ENCODE measurements at regions of chr3 and their contacts with region 1.

Region 1: GRCh38 chr3:99842826-99843589 is 25.3 kb downstream of the CMSS1 start:
- DNase-seq: peak; percentile 52
- H3K4me3 Mint-ChIP-seq: no peak overlapping the region
- H3K27ac Mint-ChIP-seq: no peak overlapping the region
- H3K4me1 Mint-ChIP-seq: no peaks in the 10 kb centered on the region
- H3K27me3 Mint-ChIP-seq: no peaks in the 10 kb centered on the region
- CTCF ChIP-seq: peak; percentile 69

Region 2: GRCh38 chr3:99699841-99700240 is 143.2 kb before region 1 on chr3:
- CTCF ChIA-PET with region 1: no interaction called
- POLR2A ChIA-PET with region 1: no interaction called
- intact Hi-C with region 1: no loop called
- DNase-seq: peak; percentile 52
- H3K4me3 Mint-ChIP-seq: no peak overlapping the region
- H3K27ac Mint-ChIP-seq: peak overlapping the region; percentile 4
- H3K4me1 Mint-ChIP-seq: peaks cover 34% of the 10 kb centered on the region
- H3K27me3 Mint-ChIP-seq: no peaks in the 10 kb centered on the region
- CTCF ChIP-seq: no peak

Region 3: GRCh38 chr3:99868311-99868646 is 25.3 kb after region 1 on chr3:
- CTCF ChIA-PET with region 1: interaction called, 12 read pairs
- POLR2A ChIA-PET with region 1: interaction called, 5 read pairs
- intact Hi-C with region 1: no loop called
- DNase-seq: peak; percentile 39
- H3K4me3 Mint-ChIP-seq: no peak overlapping the region
- H3K27ac Mint-ChIP-seq: no peak overlapping the region
- H3K4me1 Mint-ChIP-seq: peaks cover 32% of the 10 kb centered on the region
- H3K27me3 Mint-ChIP-seq: no peaks in the 10 kb centered on the region
- CTCF ChIP-seq: no peak

Region 4: GRCh38 chr3:100002599-100003350 is 159.8 kb after region 1 on chr3:
- CTCF ChIA-PET with region 1: interaction called, 20 read pairs
- POLR2A ChIA-PET with region 1: interaction called, 8 read pairs
- intact Hi-C with region 1: loop called (anchors 1 kb)
- DNase-seq: peak; percentile 89
- H3K4me3 Mint-ChIP-seq: peak overlapping the region; percentile 31
- H3K27ac Mint-ChIP-seq: peak overlapping the region; percentile 75
- H3K4me1 Mint-ChIP-seq: peaks cover 60% of the 10 kb centered on the region
- H3K27me3 Mint-ChIP-seq: no peaks in the 10 kb centered on the region
- CTCF ChIP-seq: no peak

Region 5: GRCh38 chr3:100041328-100041749 is 198.3 kb after region 1 on chr3:
- CTCF ChIA-PET with region 1: interaction called, 15 read pairs
- POLR2A ChIA-PET with region 1: interaction called, 4 read pairs
- intact Hi-C with region 1: loop called (anchors 1 kb)
- DNase-seq: peak; percentile 72
- H3K4me3 Mint-ChIP-seq: peak overlapping the region; percentile 29
- H3K27ac Mint-ChIP-seq: peak overlapping the region; percentile 79
- H3K4me1 Mint-ChIP-seq: peaks cover 54% of the 10 kb centered on the region
- H3K27me3 Mint-ChIP-seq: no peaks in the 10 kb centered on the region
- CTCF ChIP-seq: no peak

Region 6: GRCh38 chr3:100057716-100058575 is 214.9 kb after region 1 on chr3:
- CTCF ChIA-PET with region 1: interaction called, 7 read pairs
- POLR2A ChIA-PET with region 1: no interaction called
- intact Hi-C with region 1: loop called (anchors 1 kb)
- DNase-seq: no peak
- H3K4me3 Mint-ChIP-seq: no peak overlapping the region
- H3K27ac Mint-ChIP-seq: no peak overlapping the region
- H3K4me1 Mint-ChIP-seq: peaks cover 6% of the 10 kb centered on the region
- H3K27me3 Mint-ChIP-seq: no peaks in the 10 kb centered on the region
- CTCF ChIP-seq: no peak

Region 7: GRCh38 chr3:100089812-100090668 is 247.0 kb after region 1 on chr3:
- CTCF ChIA-PET with region 1: interaction called, 8 read pairs
- POLR2A ChIA-PET with region 1: no interaction called
- intact Hi-C with region 1: loop called (anchors 1 kb)
- DNase-seq: peak; percentile 65
- H3K4me3 Mint-ChIP-seq: no peak overlapping the region
- H3K27ac Mint-ChIP-seq: no peak overlapping the region
- H3K4me1 Mint-ChIP-seq: peaks cover 14% of the 10 kb centered on the region
- H3K27me3 Mint-ChIP-seq: no peaks in the 10 kb centered on the region
- CTCF ChIP-seq: peak; percentile 34

Region 8: DNA sequence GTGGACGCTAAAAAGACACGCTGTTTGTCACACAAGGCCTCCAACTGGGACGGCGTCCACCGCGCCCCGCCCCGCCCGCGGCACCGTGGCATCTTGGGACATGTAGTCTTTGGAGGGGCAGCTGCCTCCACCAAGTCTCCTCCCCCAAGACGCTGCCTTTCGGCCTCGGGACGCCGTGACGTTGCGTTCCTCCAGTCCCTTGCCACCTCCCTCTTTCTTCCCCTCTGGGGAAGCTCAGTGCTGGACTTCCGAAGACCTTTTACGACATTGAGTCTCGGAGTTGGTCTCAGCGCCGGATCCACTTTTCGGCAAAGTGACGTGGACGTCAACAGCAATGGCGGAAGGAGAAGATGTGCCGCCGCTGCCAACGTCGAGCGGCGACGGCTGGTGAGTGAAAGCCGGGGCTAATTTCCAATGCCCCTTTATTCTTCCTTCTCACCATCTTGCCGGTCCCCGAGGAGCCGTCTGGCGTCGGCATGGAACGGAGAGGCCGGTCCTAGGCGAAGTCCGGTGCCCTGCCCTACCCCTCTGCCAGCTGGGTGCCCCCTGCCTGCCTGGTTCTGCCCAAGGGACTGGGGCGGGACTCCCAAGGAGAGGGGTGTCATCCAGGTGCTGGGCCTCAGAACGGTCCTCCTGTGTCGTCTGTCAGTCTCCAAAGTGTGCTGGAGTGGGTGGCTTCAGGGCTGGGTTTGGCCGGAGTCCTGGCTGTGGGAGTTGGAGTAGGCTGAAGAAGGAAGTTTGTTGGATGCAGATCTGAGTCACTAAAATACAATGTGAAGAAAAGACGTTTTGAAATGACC is 417.9 kb after region 1 on chr3 and contains the start of gene TBC1D23:
- CTCF ChIA-PET with region 1: interaction called, 23 read pairs
- POLR2A ChIA-PET with region 1: interaction called, 5 read pairs
- intact Hi-C with region 1: no loop called
- DNase-seq: peak; percentile 99
- H3K4me3 Mint-ChIP-seq: peak within 1 kb of the TSS; percentile 78
- H3K27ac Mint-ChIP-seq: peak within 1 kb of the TSS; percentile 95
- H3K4me1 Mint-ChIP-seq: peaks cover 45% of the 10 kb centered on the region
- H3K27me3 Mint-ChIP-seq: no peaks in the 10 kb centered on the region
- CTCF ChIP-seq: no peak
- total RNA-seq, gene TBC1D23: 34.5 and 34.8 TPM in 2 replicates